Mucosa of descending colon (tissue), 3 donors: ENCODE measurements at regions of chr4 and their contacts with region 1.

Region 1: DNA sequence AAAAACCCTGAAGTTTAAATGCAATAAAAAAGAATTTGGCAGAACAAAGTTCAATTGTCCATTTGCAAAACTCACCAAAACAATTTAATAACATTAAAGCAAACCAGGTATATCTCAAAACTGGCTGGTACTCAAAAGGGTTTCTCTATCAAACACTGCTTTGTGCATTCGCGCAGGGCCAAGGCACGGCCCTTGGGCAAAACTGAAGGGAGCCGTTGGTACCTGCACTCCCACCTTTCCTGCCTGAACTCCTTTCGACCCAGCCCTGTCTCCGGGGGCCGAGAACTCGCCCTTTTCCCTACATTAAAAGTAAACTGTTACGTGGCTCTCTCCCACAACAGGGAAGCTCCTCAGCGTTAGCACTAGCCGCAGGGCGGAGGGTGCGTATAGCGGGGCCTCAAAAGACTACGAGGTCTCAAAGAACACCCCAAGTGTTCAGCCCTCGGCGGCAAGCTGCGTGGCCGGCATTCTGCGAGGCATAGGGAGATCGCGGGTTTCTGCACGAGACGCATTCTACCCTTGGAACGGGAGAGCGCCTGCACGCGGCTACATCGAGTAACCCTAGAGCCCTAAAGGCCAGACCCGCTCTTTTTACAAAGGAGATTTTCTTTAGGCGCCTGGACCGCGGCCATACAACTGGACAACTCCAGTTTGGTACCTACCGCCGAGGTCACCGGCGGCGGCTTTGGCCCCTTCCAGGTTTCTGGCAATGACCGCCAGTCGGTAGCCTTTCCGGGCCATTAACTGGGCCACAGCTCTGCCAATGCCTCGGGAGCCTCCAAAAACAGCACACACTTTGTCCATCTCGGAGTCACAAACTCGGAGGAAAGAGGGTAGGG is 550 bp downstream of the CBR4 start:
- DNase-seq: peak; percentile 77 to 83 (median 81)
- ATAC-seq: peak; percentile 71
- H3K4me3 ChIP-seq: peak overlapping the region; percentile 44
- H3K4me1 ChIP-seq: peaks cover 19% of the 10 kb centered on the region
- CTCF ChIP-seq: no peak

Region 2: DNA sequence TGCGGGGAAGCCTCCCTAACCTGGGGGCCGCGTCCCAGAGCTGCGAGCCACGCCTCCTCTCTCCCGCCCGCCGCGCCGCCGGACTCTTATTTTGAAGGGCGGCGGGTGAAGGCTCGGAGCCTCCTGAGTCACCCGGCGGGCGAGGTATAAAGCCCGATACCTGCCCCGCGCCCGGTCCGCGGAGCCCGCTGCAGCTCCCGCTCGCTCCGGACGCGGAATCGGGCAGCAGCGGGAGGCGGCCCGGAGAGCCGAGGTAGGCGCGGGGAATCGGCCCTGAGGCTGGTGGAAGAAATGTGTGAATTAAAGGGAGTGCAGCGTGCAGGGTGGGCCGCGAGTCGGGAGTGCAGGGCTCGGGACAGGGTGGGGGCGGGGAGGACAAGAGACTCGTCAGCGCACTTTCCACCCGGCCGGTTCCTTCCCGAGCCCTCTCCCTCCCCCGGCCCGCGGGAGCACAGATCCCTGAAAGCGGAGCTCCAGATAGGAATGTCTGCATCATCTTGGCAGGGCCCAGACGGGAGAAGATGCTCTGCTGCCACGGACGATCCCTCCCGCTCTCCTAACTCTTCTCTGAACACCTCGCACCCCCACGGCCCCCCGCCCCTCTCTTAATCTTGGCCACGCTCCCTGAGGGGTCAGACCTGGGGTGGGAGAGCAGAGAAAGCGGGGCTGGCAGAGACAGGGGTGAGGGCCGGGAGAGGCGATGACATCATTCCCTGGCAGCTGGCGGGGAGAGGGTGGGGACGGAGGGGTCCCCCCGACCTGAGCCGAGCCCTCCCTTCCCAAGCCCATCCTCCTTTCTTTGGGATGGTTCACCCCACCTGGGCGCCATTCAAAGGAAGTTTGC is 177.4 kb before region 1 on chr4:
- intact Hi-C with region 1: loop called in 1 of 2 experiments (anchors 10 kb)
- DNase-seq: peak; percentile 82 to 86 (median 85)
- ATAC-seq: peak; percentile 96
- H3K4me3 ChIP-seq: peak overlapping the region; percentile 37
- H3K4me1 ChIP-seq: peaks cover 5% of the 10 kb centered on the region
- CTCF ChIP-seq: no peak